Activated T-helper 2 cell treated with anti-CD3 and anti-CD28 coated beads, Interferon-gamma antibody, Interleukin-2, Interleukin-4, amounts not matched to agents 10 μg/mL and 5 μg/mL and 100 μg/mL, durations not matched to agents 14 hours and 24 hours and 36 hours (primary cell): ENCODE measurements at regions of chr2 and their contacts with region 1.

Region 1: DNA sequence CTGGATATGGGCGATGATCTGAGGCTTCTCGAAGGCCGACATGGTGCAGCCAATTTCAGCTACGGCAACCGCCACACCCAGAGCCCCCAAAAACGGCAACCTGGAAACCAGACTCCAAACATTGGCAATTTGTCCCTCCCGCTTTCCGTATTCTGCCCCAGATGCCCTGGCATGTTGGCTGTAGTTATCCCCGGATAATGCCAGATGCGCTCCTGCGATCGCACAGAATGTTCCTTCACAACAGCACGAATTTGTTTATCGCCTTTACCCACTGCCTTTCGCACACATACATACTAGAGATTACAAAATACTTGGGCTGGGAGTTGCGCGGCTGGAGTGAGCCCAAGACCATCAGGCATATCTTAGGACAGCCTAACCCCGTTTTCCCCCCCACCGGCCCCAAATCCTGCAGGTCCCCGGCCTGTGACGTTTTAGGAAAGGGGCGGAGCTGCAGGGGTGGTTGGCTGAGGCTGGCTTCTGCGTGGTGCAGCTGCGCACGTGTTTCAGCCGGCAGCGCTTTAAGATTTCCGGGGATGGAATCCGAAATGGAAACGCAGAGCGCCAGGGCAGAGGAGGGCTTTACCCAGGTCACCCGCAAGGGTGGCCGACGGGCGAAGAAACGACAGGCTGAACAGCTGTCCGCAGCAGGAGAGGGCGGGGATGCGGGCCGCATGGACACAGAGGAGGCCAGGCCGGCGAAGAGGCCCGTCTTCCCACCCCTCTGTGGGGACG is at the start of gene PNO1:
- DNase-seq: peak; percentile 95
- H3K4me3 Mint-ChIP-seq: peak within 1 kb of the TSS; percentile 95
- H3K27ac Mint-ChIP-seq: peak within 1 kb of the TSS; percentile 99
- H3K4me1 Mint-ChIP-seq: peaks cover 40% of the 10 kb centered on the region
- H3K27me3 Mint-ChIP-seq: no peaks in the 10 kb centered on the region
- total RNA-seq, gene PNO1: 24.5 and 24.7 TPM in 2 replicates

Region 2: GRCh38 chr2:68185541-68186164 is 28.1 kb after region 1 on chr2:
- intact Hi-C with region 1: no loop called
- DNase-seq: peak; percentile 35
- H3K4me3 Mint-ChIP-seq: no peak overlapping the region
- H3K27ac Mint-ChIP-seq: peak overlapping the region; percentile 67
- H3K4me1 Mint-ChIP-seq: peaks cover 20% of the 10 kb centered on the region
- H3K27me3 Mint-ChIP-seq: no peaks in the 10 kb centered on the region

Region 3: DNA sequence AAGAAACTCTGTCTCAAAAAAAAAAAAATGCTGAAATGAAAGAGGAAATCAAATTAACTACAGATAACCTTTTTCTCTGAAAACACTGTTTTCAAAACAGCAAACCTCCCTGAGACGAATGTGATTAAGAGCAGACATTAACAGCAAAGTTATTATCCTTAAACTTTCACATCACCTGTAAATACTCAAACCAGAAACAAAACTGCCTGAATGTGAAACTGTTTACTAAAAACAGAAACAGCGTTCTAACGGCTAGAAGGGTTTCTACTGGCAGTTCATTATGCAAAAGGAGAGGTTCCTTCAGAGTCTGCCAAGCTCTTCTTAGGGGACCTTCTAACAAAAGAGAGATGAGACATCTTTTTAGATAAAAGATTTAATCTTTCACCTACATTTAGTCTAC is 46.0 kb after region 1 on chr2:
- intact Hi-C with region 1: loop called (anchors 5 kb)
- DNase-seq: no peak
- H3K4me3 Mint-ChIP-seq: peak overlapping the region; percentile 64
- H3K27ac Mint-ChIP-seq: peak overlapping the region; percentile 90
- H3K4me1 Mint-ChIP-seq: peaks cover 53% of the 10 kb centered on the region
- H3K27me3 Mint-ChIP-seq: no peaks in the 10 kb centered on the region

Region 4: GRCh38 chr2:68336192-68336591 is 178.6 kb after region 1 on chr2:
- intact Hi-C with region 1: no loop called
- DNase-seq: no peak
- H3K4me3 Mint-ChIP-seq: no peak overlapping the region
- H3K27ac Mint-ChIP-seq: no peak overlapping the region
- H3K4me1 Mint-ChIP-seq: no peaks in the 10 kb centered on the region
- H3K27me3 Mint-ChIP-seq: peaks cover 41% of the 10 kb centered on the region